ENCODE measurements at regions of chr13 and their contacts with region 1.

Region 1: DNA sequence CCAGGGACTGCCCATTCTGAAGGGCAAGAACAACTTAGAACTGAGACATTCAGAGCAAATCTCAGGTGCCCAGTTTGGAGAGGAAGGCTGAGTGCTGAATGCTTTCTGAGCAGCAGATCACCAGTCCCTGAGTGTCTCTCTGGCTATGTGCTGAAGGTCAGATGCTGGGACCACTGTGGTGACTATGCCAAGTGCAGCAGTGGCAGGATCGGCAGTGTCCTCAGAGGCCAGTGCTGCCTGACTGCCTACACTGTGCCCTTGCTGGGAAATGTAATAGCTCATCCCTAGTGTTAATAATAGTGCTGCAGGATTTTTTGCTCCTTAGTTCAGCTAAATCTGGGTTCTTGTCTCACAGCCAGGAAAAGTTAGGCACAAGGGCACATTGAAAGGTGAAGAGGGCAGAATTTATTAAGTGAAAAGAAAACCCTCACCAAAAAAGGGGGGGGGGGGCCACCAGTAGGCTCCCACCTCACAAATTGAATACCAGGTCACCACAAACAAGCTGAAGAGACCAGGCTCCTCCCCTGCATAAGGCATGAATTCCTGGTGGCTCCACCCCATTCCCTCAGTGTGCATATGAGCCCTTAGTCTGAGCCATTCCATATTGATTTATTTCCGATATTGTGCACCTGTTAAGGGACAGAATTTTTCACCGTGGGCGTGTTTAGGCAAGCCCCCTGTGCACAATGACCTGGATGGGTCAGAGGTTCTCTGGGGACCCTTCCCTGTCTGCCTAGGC is 18.5 kb downstream of the RFXAP start:
- DNase-seq: no peak
- ATAC-seq: peak; percentile 81 to 87

Region 2: GRCh38 chr13:36788276-36788675 is 49.2 kb before region 1 on chr13:
- intact Hi-C with region 1: no loop called
- DNase-seq: no peak
- ATAC-seq: no peak

Region 3: GRCh38 chr13:36818804-36819738 is 18.5 kb before region 1 on chr13 and contains the start of gene RFXAP:
- intact Hi-C with region 1: loop called in 1 of 2 experiments (anchors 1 kb)
- DNase-seq: peak; percentile 94
- ATAC-seq: peak; percentile 98 to 99
- total RNA-seq, gene RFXAP: 2.7 to 3.5 TPM

Region 4: DNA sequence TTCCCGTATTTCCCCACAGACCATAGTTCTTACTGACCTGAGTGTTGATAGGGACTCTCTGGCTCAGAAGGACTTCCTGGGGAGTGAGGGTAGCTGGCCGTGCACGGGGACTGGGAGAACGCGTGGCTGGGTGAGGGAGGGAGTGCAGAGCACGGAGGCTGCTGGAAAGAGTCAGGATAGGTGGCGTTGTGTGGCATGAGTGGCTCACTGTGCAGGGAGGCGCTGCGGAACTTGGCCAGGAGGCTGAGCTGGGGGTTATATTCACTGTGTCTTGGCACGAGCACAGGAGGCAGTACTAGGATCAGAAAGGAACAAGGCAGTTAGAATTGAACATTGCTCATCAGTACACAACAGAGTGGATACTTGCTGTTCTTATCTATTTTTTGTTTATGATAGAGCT is 35.1 kb after region 1 on chr13:
- intact Hi-C with region 1: no loop called
- DNase-seq: no peak
- ATAC-seq: peak in 1 of 2 donors; percentile 27